CD14-positive monocyte (primary cell): ENCODE measurements at regions of chr7 and their contacts with region 1.

Region 1: DNA sequence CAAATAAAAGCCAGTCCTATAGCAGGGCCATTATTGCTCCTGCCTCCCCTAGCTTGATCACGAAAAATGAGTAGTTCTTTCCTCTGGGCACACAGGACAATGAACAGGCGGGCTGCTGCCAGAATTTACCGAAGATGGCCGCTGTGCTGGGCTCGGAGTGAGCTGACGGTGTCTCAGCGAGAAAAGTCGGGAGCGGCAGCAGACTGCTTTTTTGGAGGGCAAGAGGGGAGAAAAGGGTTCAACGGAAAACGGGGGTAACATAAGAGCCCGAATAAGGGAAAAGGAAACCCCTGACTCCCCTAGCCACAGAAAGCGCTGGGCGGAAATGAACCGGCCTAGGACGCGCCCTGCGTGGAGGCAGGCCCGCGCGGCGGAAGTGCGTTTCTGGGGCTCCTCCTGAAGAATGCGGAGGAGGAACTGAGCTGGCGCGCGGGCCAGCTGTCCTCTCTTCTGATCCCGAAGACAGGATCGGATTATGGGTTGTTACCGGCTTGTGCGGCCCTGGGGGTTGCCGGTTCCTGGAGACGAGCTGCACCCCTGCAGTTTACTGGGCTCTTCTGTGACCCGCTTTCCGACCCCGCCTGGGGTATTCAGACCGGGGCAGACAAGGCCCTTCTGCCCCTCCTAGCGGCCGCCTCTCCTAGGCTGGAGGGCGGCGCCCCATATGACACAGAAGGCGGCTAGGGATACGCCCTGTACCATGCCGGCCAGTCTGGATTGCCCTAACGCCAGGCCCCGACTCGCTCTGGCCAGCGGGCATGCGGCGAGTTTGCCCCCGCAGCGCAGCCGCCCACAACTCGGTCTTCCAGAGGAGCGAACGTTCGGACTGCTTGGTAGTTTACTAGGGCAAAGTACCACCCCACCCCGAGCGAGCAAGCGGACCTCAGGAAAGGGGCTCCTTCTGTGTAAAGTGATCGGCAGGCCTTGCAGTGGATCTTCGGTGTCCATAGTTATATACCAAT is 30.1 kb upstream of the KMT2E start:
- DNase-seq: peak; percentile 87 to 89 (median 87)
- H3K4me3 ChIP-seq: peak overlapping the region; percentile 53 to 86 (median 69)
- H3K4me3 Mint-ChIP-seq: peak overlapping the region; percentile 95 to 100
- H3K27ac ChIP-seq: peak overlapping the region; percentile 99 to 100
- H3K27ac Mint-ChIP-seq: peak overlapping the region; percentile 99 to 100 (median 100)
- H3K4me1 ChIP-seq: peaks cover 45 to 59% of the 10 kb centered on the region in 2 donors
- H3K4me1 Mint-ChIP-seq: peaks cover 58% of the 10 kb centered on the region
- H3K27me3 ChIP-seq: no peaks in the 10 kb centered on the region
- H3K27me3 Mint-ChIP-seq: peaks cover 0 to 3% (median 2%) of the 10 kb centered on the region in 3 donors
- CTCF ChIP-seq: peak; percentile 54

Region 2: GRCh38 chr7:104895522-104896236 is 88.2 kb before region 1 on chr7:
- intact Hi-C with region 1: no loop called
- DNase-seq: peak; percentile 23 to 35 (median 31)
- H3K4me3 ChIP-seq: no peak overlapping the region
- H3K4me3 Mint-ChIP-seq: no peak overlapping the region
- H3K27ac ChIP-seq: peak overlapping the region in 1 of 2 donors; percentile 0
- H3K27ac Mint-ChIP-seq: peak overlapping the region in 1 of 7 donors; percentile 6
- H3K4me1 ChIP-seq: peaks cover 14 to 27% of the 10 kb centered on the region in 2 donors
- H3K4me1 Mint-ChIP-seq: peaks cover 30% of the 10 kb centered on the region
- H3K27me3 ChIP-seq: no peaks in the 10 kb centered on the region
- H3K27me3 Mint-ChIP-seq: peaks cover 0 to 4% (median 3%) of the 10 kb centered on the region in 3 donors
- CTCF ChIP-seq: no peak

Region 3: DNA sequence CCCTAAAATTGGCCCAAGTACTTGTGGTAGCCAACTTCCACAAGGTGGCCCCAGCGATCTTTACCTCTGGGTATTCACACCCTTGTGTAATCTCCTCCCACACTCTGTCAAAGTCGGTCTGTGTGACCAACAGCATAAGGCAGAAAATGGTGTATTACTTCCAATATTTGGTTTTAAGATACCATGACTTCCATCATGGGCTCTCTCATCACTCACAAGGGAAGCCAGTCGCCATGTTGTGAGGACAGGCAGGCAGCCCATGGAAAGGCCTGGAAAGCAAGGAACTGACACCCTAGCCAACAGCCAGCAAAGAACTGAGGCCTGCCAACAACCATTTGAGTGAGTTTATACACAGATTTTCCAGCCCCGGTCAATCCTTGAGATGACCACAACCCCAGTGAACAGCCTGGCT is 60.8 kb before region 1 on chr7:
- intact Hi-C with region 1: loop called (anchors 2 to 5 kb)
- DNase-seq: peak; percentile 81 to 89 (median 86)
- H3K4me3 ChIP-seq: no peak overlapping the region
- H3K4me3 Mint-ChIP-seq: no peak overlapping the region
- H3K27ac ChIP-seq: no peak overlapping the region
- H3K27ac Mint-ChIP-seq: peak overlapping the region in 4 of 7 donors; percentile 28 to 68 (median 52)
- H3K4me1 ChIP-seq: peaks cover 0 to 2% of the 10 kb centered on the region in 2 donors
- H3K4me1 Mint-ChIP-seq: peaks cover 4% of the 10 kb centered on the region
- H3K27me3 ChIP-seq: no peaks in the 10 kb centered on the region
- H3K27me3 Mint-ChIP-seq: no peaks in the 10 kb centered on the region
- CTCF ChIP-seq: peak; percentile 78

Region 4: DNA sequence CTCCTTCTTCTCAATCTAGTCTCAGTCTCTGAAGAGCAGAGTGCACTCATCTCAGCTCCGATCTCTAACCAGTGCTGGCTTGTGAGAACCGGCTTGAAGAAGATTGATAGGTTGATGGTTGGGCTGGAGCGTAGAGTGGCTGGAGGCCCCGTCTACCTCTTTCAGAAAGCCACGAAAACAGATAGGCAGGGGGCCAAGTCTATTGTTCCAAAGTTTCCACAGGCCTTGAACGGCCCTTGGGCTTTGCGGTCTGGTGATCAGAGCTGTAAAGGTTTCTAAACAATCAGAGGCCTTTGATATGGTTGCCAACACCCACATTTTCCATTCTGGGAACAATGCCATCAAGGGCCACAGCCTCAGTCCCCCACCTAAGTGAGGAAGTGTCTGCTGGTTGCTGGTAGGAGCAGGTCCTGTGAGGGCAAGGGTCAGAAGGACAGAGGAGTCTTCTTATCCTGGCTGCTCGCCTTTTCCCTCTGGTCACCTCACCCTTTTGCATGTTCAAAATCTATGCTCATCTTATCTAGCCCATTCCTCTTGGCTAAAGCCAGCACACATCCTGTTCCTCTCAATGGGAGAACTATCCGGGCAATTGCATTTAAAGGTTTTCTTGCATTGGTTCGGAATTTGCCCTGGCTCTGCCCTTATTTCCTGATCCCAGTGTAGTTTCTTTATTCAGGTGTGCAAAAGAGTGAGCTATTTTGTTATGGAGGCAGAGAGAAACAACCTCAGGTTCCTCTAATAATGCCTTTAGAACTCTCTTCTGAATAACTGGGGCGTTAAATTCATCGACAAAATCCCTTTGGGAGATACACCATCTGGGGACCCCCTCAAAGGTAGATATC is 40.1 kb before region 1 on chr7:
- intact Hi-C with region 1: loop called (anchors 5 kb)
- DNase-seq: peak in 2 of 3 donors; percentile 36 to 55
- H3K4me3 ChIP-seq: peak overlapping the region in 1 of 3 experiments; percentile 31
- H3K4me3 Mint-ChIP-seq: peak overlapping the region; percentile 56 to 60
- H3K27ac ChIP-seq: peak overlapping the region; percentile 93 to 99
- H3K27ac Mint-ChIP-seq: peak overlapping the region; percentile 99 to 100 (median 100)
- H3K4me1 ChIP-seq: peaks cover 49 to 61% of the 10 kb centered on the region in 2 donors
- H3K4me1 Mint-ChIP-seq: peaks cover 56% of the 10 kb centered on the region
- H3K27me3 ChIP-seq: no peaks in the 10 kb centered on the region
- H3K27me3 Mint-ChIP-seq: no peaks in the 10 kb centered on the region
- CTCF ChIP-seq: no peak

Region 5: GRCh38 chr7:105013221-105013815 is 29.5 kb after region 1 on chr7:
- intact Hi-C with region 1: loop called (anchors 2 kb)
- DNase-seq: peak; percentile 91 to 95 (median 94)
- H3K4me3 ChIP-seq: peak overlapping the region; percentile 76 to 100 (median 99)
- H3K4me3 Mint-ChIP-seq: peak overlapping the region; percentile 97 to 98
- H3K27ac ChIP-seq: peak overlapping the region; percentile 94 to 100
- H3K27ac Mint-ChIP-seq: peak overlapping the region; percentile 100
- H3K4me1 ChIP-seq: peaks cover 41 to 61% of the 10 kb centered on the region in 2 donors
- H3K4me1 Mint-ChIP-seq: peaks cover 40% of the 10 kb centered on the region
- H3K27me3 ChIP-seq: no peaks in the 10 kb centered on the region
- H3K27me3 Mint-ChIP-seq: peaks cover 0 to 8% (median 4%) of the 10 kb centered on the region in 3 donors
- CTCF ChIP-seq: peak; percentile 68

Region 6: DNA sequence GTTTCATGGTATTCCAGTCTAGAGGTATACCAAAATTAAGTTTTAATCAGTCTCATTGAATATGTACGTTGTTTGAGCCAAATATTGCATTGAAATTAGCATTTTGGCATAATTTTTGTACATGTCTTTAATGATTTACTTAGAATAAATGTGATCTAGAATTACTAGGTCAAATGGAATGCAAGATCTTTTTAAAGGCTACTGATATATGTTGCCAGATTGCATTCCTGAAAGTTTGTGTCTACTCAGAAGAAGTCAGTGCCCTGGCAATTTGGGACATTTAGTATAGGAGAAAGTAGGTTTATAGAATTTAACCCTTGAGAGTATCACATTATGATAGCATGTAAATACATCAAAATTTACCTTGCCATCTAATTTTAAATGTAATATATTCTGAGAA is 62.6 kb after region 1 on chr7:
- intact Hi-C with region 1: loop called in 1 of 2 experiments (anchors 10 kb)
- DNase-seq: no peak
- H3K4me3 ChIP-seq: no peak overlapping the region
- H3K4me3 Mint-ChIP-seq: no peak overlapping the region
- H3K27ac ChIP-seq: peak overlapping the region in 1 of 2 donors; percentile 12
- H3K27ac Mint-ChIP-seq: no peak overlapping the region
- H3K4me1 ChIP-seq: no peaks in the 10 kb centered on the region
- H3K4me1 Mint-ChIP-seq: peaks cover 8% of the 10 kb centered on the region
- H3K27me3 ChIP-seq: no peaks in the 10 kb centered on the region
- H3K27me3 Mint-ChIP-seq: no peaks in the 10 kb centered on the region
- CTCF ChIP-seq: no peak